HEK293 (cell line): ENCODE measurements at regions of chr2 and their contacts with region 1.

Region 1: GRCh38 chr2:73156539-73157124 is 43.9 kb upstream of the RAB11FIP5 start:
- H3K4me3 ChIP-seq: no peak overlapping the region
- H3K27ac ChIP-seq: no peak overlapping the region
- H3K4me1 ChIP-seq: no peaks in the 10 kb centered on the region
- CTCF ChIP-seq: peak; percentile 97

Region 2: DNA sequence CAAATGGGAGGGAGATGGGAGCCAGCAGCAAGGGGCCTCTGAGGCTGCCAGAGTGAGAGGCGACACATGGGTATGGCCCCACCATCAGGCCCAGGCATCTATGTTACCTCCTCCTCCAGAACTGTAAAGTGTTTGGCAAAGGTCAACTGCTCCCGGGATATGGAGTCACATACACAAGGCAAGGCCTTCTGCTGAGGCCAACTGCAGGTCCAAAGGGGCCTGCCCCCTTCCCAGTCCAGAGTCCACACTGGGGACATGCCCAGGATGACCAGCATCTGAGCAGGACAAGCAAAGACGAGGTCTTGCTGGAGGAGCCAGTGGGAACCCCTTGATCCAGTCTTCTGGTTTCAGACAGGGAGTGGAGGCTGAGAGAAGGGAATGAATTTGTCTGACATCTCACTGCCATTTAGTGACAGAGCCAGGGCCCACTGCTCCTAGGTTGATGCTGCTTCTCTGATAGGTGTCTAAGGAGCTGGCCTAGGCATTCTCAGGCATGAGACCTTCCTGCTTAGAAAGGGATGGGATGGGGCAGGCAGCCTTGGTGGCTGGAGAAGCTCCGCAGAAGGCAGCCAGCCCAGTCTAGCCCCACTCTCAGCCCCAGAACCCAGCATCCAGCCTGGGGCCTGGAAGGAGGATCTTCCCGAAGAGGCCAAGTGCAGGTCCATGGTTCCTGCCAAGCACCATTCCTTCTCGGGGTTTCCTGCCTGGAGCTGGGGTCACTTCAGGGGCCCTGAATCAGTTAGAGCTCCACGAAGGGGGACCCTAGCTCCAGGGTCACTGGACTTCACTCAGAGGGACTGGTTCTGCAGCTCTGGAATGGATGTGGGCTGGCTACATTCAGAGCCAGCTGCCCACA is 212.9 kb before region 1 on chr2:
- CTCF ChIA-PET with region 1: no interaction called
- POLR2A ChIA-PET with region 1: no interaction called
- H3K4me3 ChIP-seq: no peak overlapping the region
- H3K27ac ChIP-seq: no peak overlapping the region
- H3K4me1 ChIP-seq: peaks cover 5% of the 10 kb centered on the region; the same call in 1 of the 2 replicates
- CTCF ChIP-seq: no peak

Region 3: DNA sequence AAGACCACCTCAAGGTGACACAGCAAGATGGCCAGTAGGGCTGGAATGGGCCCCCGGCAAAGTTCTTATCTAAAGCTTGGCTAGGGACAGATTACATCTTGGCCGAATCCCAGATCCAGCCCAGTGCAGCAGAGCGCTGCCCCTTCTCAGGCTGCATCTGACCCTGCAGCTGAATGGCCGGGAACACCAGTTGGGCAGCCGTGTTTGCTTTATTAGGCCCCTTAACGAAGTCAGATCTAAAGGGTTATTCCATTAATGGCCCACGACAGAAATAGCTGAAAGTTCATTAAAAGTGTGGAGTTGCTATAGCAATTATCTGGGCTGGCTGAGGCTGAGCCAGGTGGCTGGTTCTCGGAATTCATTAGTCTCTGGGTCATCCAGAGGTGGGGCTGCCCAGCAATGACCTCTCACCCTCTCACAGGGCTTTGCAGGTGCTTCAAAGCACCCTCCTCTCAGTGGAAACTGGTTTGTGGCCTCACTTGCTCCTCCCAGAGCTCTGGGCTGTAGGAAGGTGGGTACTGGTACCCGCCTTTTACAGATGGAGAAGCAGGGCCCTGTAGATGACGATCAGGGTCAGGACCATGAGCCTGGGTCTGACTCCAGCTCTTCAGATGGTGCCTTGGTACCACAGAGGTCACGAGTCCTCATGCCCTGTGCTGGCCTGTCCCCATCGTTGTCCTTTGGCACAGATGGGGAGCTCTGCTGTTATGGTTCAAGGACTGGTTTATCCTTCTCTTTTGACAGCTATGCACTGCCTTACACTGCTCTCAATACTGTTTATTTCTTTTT is 170.5 kb before region 1 on chr2:
- CTCF ChIA-PET with region 1: interaction called, 29 read pairs
- POLR2A ChIA-PET with region 1: no interaction called
- H3K4me3 ChIP-seq: no peak overlapping the region
- H3K27ac ChIP-seq: no peak overlapping the region
- H3K4me1 ChIP-seq: peaks cover 3% of the 10 kb centered on the region; the same call in 1 of the 2 replicates
- CTCF ChIP-seq: no peak

Region 4: DNA sequence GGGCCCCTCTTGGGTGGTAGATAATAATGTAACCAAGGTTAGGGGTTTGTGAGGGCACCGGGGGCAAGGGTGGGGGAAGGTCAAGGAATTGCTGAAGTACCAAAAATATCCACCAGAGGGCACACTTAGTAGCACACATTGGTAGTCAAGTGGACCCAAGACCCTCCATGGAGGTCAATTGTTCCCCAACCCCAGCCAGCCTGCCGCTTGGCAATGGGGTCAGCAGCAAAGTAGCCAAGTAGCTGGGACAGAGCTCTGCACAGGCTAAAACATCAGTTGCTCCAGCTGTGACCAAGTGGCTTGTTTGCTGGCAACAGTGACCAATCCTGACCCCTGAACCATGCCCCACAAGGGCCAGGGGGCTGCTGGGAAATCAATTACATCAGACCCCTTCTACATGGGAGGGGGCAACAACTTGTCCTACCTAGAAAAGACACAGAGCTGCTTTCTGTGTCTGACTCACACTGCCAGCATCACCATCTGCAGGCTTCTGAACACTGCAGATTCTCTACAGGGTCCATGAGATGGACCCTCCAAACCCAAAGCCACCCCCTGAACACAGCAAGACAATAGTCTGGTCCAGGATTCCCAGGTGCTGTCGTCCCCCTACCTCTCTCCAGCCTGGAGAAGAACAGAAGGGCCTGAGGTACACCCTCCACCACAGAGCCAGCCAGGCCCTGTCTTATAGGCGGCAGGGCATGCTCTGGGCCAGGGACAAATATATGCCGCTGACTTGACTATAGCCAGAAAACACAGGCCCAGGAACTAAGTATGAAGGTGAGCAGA is 163.3 kb before region 1 on chr2:
- CTCF ChIA-PET with region 1: interaction called, 29 read pairs
- POLR2A ChIA-PET with region 1: no interaction called
- H3K4me3 ChIP-seq: no peak overlapping the region
- H3K27ac ChIP-seq: no peak overlapping the region
- H3K4me1 ChIP-seq: no peaks in the 10 kb centered on the region
- CTCF ChIP-seq: peak; percentile 51; the same call in 1 of the 2 replicates

Region 5: GRCh38 chr2:73085691-73086360 is 70.8 kb before region 1 on chr2:
- CTCF ChIA-PET with region 1: interaction called, 146 read pairs
- POLR2A ChIA-PET with region 1: no interaction called
- H3K4me3 ChIP-seq: no peak overlapping the region
- H3K27ac ChIP-seq: no peak overlapping the region
- H3K4me1 ChIP-seq: no peaks in the 10 kb centered on the region; the same call in 1 of the 2 replicates
- CTCF ChIP-seq: peak; percentile 77

Region 6: GRCh38 chr2:73112913-73113633 is 43.6 kb before region 1 on chr2 and contains the start of gene RAB11FIP5:
- CTCF ChIA-PET with region 1: interaction called, 16 read pairs
- POLR2A ChIA-PET with region 1: no interaction called
- H3K4me3 ChIP-seq: peak within 1 kb of the TSS; percentile 64
- H3K27ac ChIP-seq: peak within 1 kb of the TSS; percentile 90
- H3K4me1 ChIP-seq: peaks cover 17% of the 10 kb centered on the region; the same call in 1 of the 2 replicates
- CTCF ChIP-seq: peak; percentile 74

Region 7: GRCh38 chr2:73142937-73143336 is 13.7 kb before region 1 on chr2:
- CTCF ChIA-PET with region 1: interaction called, 16 read pairs
- POLR2A ChIA-PET with region 1: no interaction called
- H3K4me3 ChIP-seq: no peak overlapping the region
- H3K27ac ChIP-seq: no peak overlapping the region
- H3K4me1 ChIP-seq: no peaks in the 10 kb centered on the region
- CTCF ChIP-seq: no peak

Region 8: GRCh38 chr2:73176881-73177644 is 20.4 kb after region 1 on chr2:
- CTCF ChIA-PET with region 1: interaction called, 27 read pairs
- POLR2A ChIA-PET with region 1: interaction called, 5 read pairs
- H3K4me3 ChIP-seq: peak overlapping the region; percentile 26
- H3K27ac ChIP-seq: no peak overlapping the region
- H3K4me1 ChIP-seq: peaks cover 3% of the 10 kb centered on the region; the same call in 1 of the 2 replicates
- CTCF ChIP-seq: peak; percentile 100